ENCODE measurements at regions of chrX and their contacts with region 1.

Region 1: DNA sequence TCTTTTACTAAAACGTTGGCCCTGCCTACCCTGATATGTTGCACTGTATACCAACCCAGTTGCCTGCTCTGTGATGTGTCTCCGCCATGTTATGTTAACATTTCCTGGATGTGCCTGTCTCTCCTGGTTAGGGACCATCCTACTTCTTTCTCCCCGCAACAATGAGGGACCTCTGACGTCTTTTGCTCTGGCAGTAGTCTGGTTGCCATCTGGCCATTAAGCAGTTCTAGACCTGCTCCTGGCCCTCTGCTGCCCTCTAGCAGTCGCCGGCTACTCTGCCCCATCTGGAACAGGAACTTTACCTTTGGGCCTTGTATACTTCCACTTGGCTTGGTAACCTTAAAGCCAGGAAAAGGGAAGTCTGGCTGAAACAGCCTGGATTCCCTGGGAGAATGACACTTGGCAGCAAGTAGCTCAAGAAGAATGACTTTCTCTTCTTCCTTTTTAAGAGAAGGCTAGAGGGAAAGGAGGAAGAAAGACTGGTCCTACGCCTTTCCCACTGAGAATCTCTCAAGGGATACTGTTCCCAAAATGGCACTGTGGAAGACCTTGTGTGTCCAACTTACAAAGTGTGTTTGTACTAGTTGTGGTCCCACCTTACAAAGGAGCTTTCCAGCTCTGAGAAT is 63.5 kb downstream of the GPC3 start:
- DNase-seq: peak; percentile 17
- ATAC-seq: no peak
- H3K4me3 ChIP-seq: no peak overlapping the region
- H3K4me3 Mint-ChIP-seq: no peak overlapping the region
- H3K27ac ChIP-seq: no peak overlapping the region
- H3K27ac Mint-ChIP-seq: no peak overlapping the region
- H3K4me1 ChIP-seq: peaks cover 4 to 9% of the 10 kb centered on the region in 2 donors
- H3K4me1 Mint-ChIP-seq: peaks cover 6% of the 10 kb centered on the region
- H3K27me3 ChIP-seq: no peaks in the 10 kb centered on the region
- H3K27me3 Mint-ChIP-seq: no peaks in the 10 kb centered on the region
- CTCF ChIP-seq: peak; percentile 32

Region 2: DNA sequence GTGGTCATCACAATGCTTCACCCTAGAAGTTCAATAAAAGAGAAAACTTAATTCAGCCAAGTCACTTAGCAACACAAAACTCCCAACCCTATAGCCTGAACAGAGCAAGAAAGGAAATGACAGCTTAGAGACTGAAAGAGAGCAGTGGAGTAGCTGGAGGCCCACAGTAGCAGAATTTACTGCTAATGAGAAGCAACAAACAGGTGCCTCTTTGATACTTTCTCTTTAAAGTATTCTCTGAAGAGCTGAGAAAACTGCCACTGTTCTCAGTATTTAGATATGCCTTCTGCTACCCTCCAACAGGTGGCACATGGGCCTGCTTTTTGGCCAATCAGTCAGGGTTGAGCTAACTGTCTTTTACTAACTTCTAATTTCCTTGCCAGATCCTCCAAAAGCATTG is 176.5 kb before region 1 on chrX:
- CTCF ChIA-PET with region 1: interaction called, 4 read pairs
- POLR2A ChIA-PET with region 1: no interaction called
- intact Hi-C with region 1: loop called (anchors 5 kb)
- DNase-seq: peak; percentile 25
- ATAC-seq: peak; percentile 33
- H3K4me3 ChIP-seq: no peak overlapping the region
- H3K4me3 Mint-ChIP-seq: no peak overlapping the region
- H3K27ac ChIP-seq: no peak overlapping the region
- H3K27ac Mint-ChIP-seq: no peak overlapping the region
- H3K4me1 ChIP-seq: no peaks in the 10 kb centered on the region
- H3K4me1 Mint-ChIP-seq: peaks cover 6% of the 10 kb centered on the region
- H3K27me3 ChIP-seq: no peaks in the 10 kb centered on the region
- H3K27me3 Mint-ChIP-seq: no peaks in the 10 kb centered on the region
- CTCF ChIP-seq: peak; percentile 36

Region 3: GRCh38 chrX:133907606-133908005 is 14.3 kb before region 1 on chrX:
- CTCF ChIA-PET with region 1: no interaction called
- POLR2A ChIA-PET with region 1: no interaction called
- intact Hi-C with region 1: no loop called
- DNase-seq: no peak
- ATAC-seq: no peak
- H3K4me3 ChIP-seq: no peak overlapping the region
- H3K4me3 Mint-ChIP-seq: no peak overlapping the region
- H3K27ac ChIP-seq: no peak overlapping the region
- H3K27ac Mint-ChIP-seq: no peak overlapping the region
- H3K4me1 ChIP-seq: no peaks in the 10 kb centered on the region
- H3K4me1 Mint-ChIP-seq: no peaks in the 10 kb centered on the region
- H3K27me3 ChIP-seq: peaks cover 0 to 3% (median 0%) of the 10 kb centered on the region in 4 experiments
- H3K27me3 Mint-ChIP-seq: no peaks in the 10 kb centered on the region
- CTCF ChIP-seq: no peak